ENCODE measurements at regions of chr22 and their contacts with region 1.

Region 1: GRCh38 chr22:23539135-23539838 is 40.8 kb downstream of the IGLL1 start:
- DNase-seq: peak; percentile 59 to 88 (median 66)
- ATAC-seq: peak; percentile 100
- H3K4me3 ChIP-seq: no peak overlapping the region
- H3K4me3 Mint-ChIP-seq: peak overlapping the region; percentile 20
- H3K27ac ChIP-seq: no peak overlapping the region
- H3K27ac Mint-ChIP-seq: no peak overlapping the region
- H3K4me1 ChIP-seq: peaks cover 6% of the 10 kb centered on the region
- H3K4me1 Mint-ChIP-seq: peaks cover 10% of the 10 kb centered on the region
- H3K27me3 ChIP-seq: no peaks in the 10 kb centered on the region
- H3K27me3 Mint-ChIP-seq: no peaks in the 10 kb centered on the region
- CTCF ChIP-seq: peak; percentile 81

Region 2: GRCh38 chr22:23315341-23315917 is 223.9 kb before region 1 on chr22:
- CTCF ChIA-PET with region 1: no interaction called
- POLR2A ChIA-PET with region 1: no interaction called
- intact Hi-C with region 1: loop called in 1 of 2 experiments (anchors 10 kb)
- DNase-seq: peak in 13 of 14 experiments; percentile 19 to 67 (median 50)
- ATAC-seq: no peak
- H3K4me3 ChIP-seq: no peak overlapping the region
- H3K4me3 Mint-ChIP-seq: no peak overlapping the region
- H3K27ac ChIP-seq: no peak overlapping the region
- H3K27ac Mint-ChIP-seq: no peak overlapping the region
- H3K4me1 ChIP-seq: peaks cover 4% of the 10 kb centered on the region
- H3K4me1 Mint-ChIP-seq: no peaks in the 10 kb centered on the region
- H3K27me3 ChIP-seq: no peaks in the 10 kb centered on the region
- H3K27me3 Mint-ChIP-seq: no peaks in the 10 kb centered on the region
- CTCF ChIP-seq: no peak

Region 3: GRCh38 chr22:23402275-23403151 is 136.8 kb before region 1 on chr22:
- CTCF ChIA-PET with region 1: no interaction called
- POLR2A ChIA-PET with region 1: no interaction called
- intact Hi-C with region 1: loop called (anchors 1 to 5 kb)
- DNase-seq: peak in 13 of 14 experiments; percentile 17 to 78 (median 40)
- ATAC-seq: peak; percentile 86
- H3K4me3 ChIP-seq: no peak overlapping the region
- H3K4me3 Mint-ChIP-seq: no peak overlapping the region
- H3K27ac ChIP-seq: no peak overlapping the region
- H3K27ac Mint-ChIP-seq: no peak overlapping the region
- H3K4me1 ChIP-seq: peaks cover 5% of the 10 kb centered on the region
- H3K4me1 Mint-ChIP-seq: no peaks in the 10 kb centered on the region
- H3K27me3 ChIP-seq: peaks cover 0 to 2% of the 10 kb centered on the region in 2 experiments
- H3K27me3 Mint-ChIP-seq: no peaks in the 10 kb centered on the region
- CTCF ChIP-seq: peak; percentile 19